CD8-positive, alpha-beta T cell (primary cell): ENCODE measurements at regions of chr12 and their contacts with region 1.

Region 1: GRCh38 chr12:56041552-56042429 is at the start of gene RPS26:
- DNase-seq: peak; percentile 79 to 99 (median 92)
- ATAC-seq: peak; percentile 93
- H3K4me3 ChIP-seq: peak within 1 kb of the TSS; percentile 71 to 83
- H3K4me3 Mint-ChIP-seq: peak within 1 kb of the TSS; percentile 99
- H3K27ac ChIP-seq: peak within 1 kb of the TSS; percentile 75 to 95
- H3K27ac Mint-ChIP-seq: peak within 1 kb of the TSS; percentile 99
- H3K4me1 ChIP-seq: peaks cover 29% of the 10 kb centered on the region
- H3K4me1 Mint-ChIP-seq: peaks cover 42% of the 10 kb centered on the region
- H3K27me3 ChIP-seq: no peaks in the 10 kb centered on the region
- H3K27me3 Mint-ChIP-seq: no peaks in the 10 kb centered on the region
- CTCF ChIP-seq: peak; percentile 48
- total RNA-seq, gene RPS26: 33.8 to 36.7 TPM

Region 2: DNA sequence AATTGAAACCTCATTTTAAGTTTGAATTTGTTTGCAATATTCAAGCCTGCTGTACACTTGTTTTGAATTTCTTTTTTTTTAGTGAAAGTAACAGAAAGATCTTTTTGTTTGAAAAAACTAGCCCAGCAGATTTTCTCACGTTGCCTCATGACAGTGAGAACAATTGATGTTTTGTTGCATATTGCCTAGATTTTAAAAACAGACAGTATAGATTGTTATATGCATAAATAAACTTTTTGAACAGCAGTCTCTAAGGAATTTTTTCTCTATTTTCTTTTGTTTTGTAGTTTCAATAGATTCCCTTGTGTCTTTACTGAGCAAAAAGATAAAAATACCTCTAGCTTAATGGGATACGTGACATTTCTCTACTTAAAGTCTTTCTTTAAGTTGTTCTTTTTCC is 760.8 kb before region 1 on chr12:
- CTCF ChIA-PET with region 1: no interaction called
- POLR2A ChIA-PET with region 1: no interaction called
- intact Hi-C with region 1: no loop called
- DNase-seq: no peak
- ATAC-seq: no peak
- H3K4me3 ChIP-seq: no peak overlapping the region
- H3K4me3 Mint-ChIP-seq: no peak overlapping the region
- H3K27ac ChIP-seq: no peak overlapping the region
- H3K27ac Mint-ChIP-seq: no peak overlapping the region
- H3K4me1 ChIP-seq: no peaks in the 10 kb centered on the region
- H3K4me1 Mint-ChIP-seq: no peaks in the 10 kb centered on the region
- H3K27me3 ChIP-seq: no peaks in the 10 kb centered on the region
- H3K27me3 Mint-ChIP-seq: peaks cover 18% of the 10 kb centered on the region
- CTCF ChIP-seq: no peak

Region 3: DNA sequence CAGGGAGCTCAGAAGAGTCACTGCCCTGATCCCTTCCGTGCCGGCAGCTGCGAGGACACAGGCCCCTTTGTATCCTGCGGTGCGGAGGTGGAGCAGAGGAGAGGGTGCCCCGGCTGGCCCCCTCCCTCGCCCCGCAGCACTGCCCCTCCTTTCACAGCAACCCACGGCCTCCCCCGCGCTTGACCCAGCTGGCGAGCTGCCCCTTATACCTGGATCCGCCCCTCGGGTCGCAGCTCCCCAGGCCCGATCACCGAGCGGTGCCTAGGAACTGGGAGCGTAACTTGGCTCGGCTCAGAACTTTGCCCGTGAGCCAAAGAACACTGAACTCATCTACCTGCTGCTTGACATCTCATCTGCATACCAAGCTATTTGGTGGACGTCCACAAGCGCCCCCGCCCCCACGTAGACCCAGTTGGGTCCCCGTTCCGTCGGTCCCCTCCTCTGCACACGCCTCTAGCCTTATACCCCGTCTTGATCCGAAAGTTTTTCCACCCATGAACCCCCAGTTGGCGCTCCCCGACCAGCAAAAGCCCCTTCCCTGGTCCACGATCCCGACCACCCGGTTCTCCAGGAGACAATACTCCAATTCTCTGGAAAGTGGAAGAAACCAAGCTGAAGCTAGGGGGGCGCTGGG is 211.7 kb before region 1 on chr12:
- CTCF ChIA-PET with region 1: interaction called, 3 read pairs
- POLR2A ChIA-PET with region 1: no interaction called
- intact Hi-C with region 1: loop called (anchors 1 kb)
- DNase-seq: peak in 7 of 9 experiments; percentile 15 to 63 (median 48)
- ATAC-seq: peak; percentile 16
- H3K4me3 ChIP-seq: peak overlapping the region; percentile 65 to 93
- H3K4me3 Mint-ChIP-seq: peak overlapping the region; percentile 99
- H3K27ac ChIP-seq: peak overlapping the region; percentile 71 to 79
- H3K27ac Mint-ChIP-seq: peak overlapping the region; percentile 95
- H3K4me1 ChIP-seq: peaks cover 45% of the 10 kb centered on the region
- H3K4me1 Mint-ChIP-seq: peaks cover 56% of the 10 kb centered on the region
- H3K27me3 ChIP-seq: no peaks in the 10 kb centered on the region
- H3K27me3 Mint-ChIP-seq: no peaks in the 10 kb centered on the region
- CTCF ChIP-seq: no peak

Region 4: DNA sequence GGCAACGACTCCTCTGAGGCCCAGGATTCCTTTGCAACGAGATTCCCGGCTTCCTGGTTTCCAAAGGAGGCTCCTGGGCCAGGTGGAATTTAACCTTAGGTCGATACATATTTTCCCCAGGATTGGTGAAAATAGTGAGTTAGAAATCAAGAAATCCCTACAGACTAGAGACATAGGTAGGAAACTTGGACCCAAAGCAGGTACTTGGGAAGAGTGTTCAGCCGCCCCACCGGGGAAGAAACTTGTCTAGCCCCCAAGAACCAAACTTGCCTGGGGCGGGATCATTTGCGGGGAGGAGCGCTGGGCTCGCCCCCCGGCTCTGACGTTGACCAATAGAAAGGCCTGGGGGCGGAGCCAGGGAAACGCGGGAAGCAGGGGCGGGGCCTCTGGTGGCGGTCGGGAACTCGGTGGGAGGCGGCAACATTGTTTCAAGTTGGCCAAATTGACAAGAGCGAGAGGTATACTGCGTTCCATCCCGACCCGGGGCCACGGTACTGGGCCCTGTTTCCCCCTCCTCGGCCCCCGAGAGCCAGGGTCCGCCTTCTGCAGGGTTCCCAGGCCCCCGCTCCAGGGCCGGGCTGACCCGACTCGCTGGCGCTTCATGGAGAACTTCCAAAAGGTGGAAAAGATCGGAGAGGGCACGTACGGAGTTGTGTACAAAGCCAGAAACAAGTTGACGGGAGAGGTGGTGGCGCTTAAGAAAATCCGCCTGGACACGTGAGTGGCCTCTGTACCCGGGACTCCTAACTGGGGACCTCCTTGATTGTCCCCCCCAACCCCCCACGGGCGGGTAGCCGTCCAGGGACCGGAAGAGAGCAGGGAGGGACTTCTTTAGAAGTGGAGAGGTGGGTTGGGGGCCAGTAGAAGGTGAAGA is 75.1 kb before region 1 on chr12 and contains the start of gene CDK2:
- CTCF ChIA-PET with region 1: no interaction called
- POLR2A ChIA-PET with region 1: no interaction called
- intact Hi-C with region 1: no loop called
- DNase-seq: peak; percentile 61 to 92 (median 91)
- ATAC-seq: peak; percentile 98
- H3K4me3 ChIP-seq: peak within 1 kb of the TSS; percentile 70 to 81
- H3K4me3 Mint-ChIP-seq: peak within 1 kb of the TSS; percentile 90
- H3K27ac ChIP-seq: peak within 1 kb of the TSS; percentile 41 to 46
- H3K27ac Mint-ChIP-seq: peak within 1 kb of the TSS; percentile 85
- H3K4me1 ChIP-seq: peaks cover 18% of the 10 kb centered on the region
- H3K4me1 Mint-ChIP-seq: peaks cover 34% of the 10 kb centered on the region
- H3K27me3 ChIP-seq: no peaks in the 10 kb centered on the region
- H3K27me3 Mint-ChIP-seq: no peaks in the 10 kb centered on the region
- CTCF ChIP-seq: no peak
- total RNA-seq, gene CDK2: 12.8 to 13.5 TPM

Region 5: GRCh38 chr12:55996715-55997534 is 44.9 kb before region 1 on chr12 and contains the start of gene SUOX:
- CTCF ChIA-PET with region 1: interaction called, 26 read pairs
- POLR2A ChIA-PET with region 1: interaction called, 6 read pairs
- intact Hi-C with region 1: loop called (anchors 1 kb)
- DNase-seq: peak in 6 of 9 experiments; percentile 7 to 52 (median 26)
- ATAC-seq: no peak
- H3K4me3 ChIP-seq: peak within 1 kb of the TSS; percentile 14 to 34
- H3K4me3 Mint-ChIP-seq: peak within 1 kb of the TSS; percentile 66
- H3K27ac ChIP-seq: no peak within 1 kb of the TSS
- H3K27ac Mint-ChIP-seq: no peak within 1 kb of the TSS
- H3K4me1 ChIP-seq: peaks cover 14% of the 10 kb centered on the region
- H3K4me1 Mint-ChIP-seq: peaks cover 23% of the 10 kb centered on the region
- H3K27me3 ChIP-seq: peaks cover 0 to 12% of the 10 kb centered on the region in 2 experiments
- H3K27me3 Mint-ChIP-seq: peaks cover 6% of the 10 kb centered on the region
- CTCF ChIP-seq: no peak
- total RNA-seq, gene SUOX: 0.72 to 1.2 TPM

Region 6: DNA sequence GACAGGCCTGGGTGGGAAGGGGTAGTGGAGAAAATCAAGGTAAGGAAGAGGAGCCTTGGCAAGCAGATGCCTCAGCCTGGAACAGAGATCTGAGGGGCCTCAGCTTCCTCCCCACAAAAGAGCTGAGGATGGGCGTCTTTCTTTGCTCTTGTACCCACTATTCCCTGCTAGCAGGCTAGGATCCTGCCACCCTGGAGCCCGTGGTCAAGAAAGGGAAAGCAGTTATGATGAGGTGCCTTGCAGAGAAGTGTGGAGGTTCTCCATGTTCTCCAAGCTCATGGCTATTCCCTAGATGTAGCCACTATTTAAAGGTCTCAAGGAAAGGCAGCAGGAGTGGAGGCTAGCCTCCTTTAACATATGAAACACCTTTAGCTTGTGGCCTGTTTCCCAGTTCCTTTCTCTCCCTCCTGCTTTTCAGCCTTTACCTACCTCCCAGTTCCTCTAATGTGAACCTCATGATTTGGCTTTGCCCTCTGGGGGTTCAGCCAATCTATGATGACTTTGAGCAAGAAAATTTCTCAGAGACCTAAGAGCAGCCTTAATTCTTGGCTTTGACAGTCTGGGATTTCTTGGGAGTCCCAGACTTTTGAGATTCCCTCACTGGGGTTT is 19.8 kb before region 1 on chr12:
- CTCF ChIA-PET with region 1: no interaction called
- POLR2A ChIA-PET with region 1: no interaction called
- intact Hi-C with region 1: no loop called
- DNase-seq: no peak
- ATAC-seq: peak; percentile 23
- H3K4me3 ChIP-seq: peak overlapping the region; percentile 11 to 17
- H3K4me3 Mint-ChIP-seq: peak overlapping the region; percentile 80
- H3K27ac ChIP-seq: no peak overlapping the region
- H3K27ac Mint-ChIP-seq: peak overlapping the region; percentile 69
- H3K4me1 ChIP-seq: peaks cover 21% of the 10 kb centered on the region
- H3K4me1 Mint-ChIP-seq: peaks cover 17% of the 10 kb centered on the region
- H3K27me3 ChIP-seq: no peaks in the 10 kb centered on the region
- H3K27me3 Mint-ChIP-seq: no peaks in the 10 kb centered on the region
- CTCF ChIP-seq: no peak

Region 7: GRCh38 chr12:56104109-56104814 is 62.5 kb after region 1 on chr12 and contains the start of gene PA2G4:
- CTCF ChIA-PET with region 1: interaction called, 12 read pairs
- POLR2A ChIA-PET with region 1: interaction called, 20 read pairs
- intact Hi-C with region 1: loop called (anchors 1 kb)
- DNase-seq: peak; percentile 91 to 99 (median 96)
- ATAC-seq: peak; percentile 88
- H3K4me3 ChIP-seq: peak within 1 kb of the TSS; percentile 90
- H3K4me3 Mint-ChIP-seq: peak within 1 kb of the TSS; percentile 99
- H3K27ac ChIP-seq: peak within 1 kb of the TSS; percentile 53 to 70
- H3K27ac Mint-ChIP-seq: peak within 1 kb of the TSS; percentile 98
- H3K4me1 ChIP-seq: peaks cover 37% of the 10 kb centered on the region
- H3K4me1 Mint-ChIP-seq: peaks cover 66% of the 10 kb centered on the region
- H3K27me3 ChIP-seq: no peaks in the 10 kb centered on the region
- H3K27me3 Mint-ChIP-seq: no peaks in the 10 kb centered on the region
- CTCF ChIP-seq: no peak
- total RNA-seq, gene PA2G4: 61.6 to 62.4 TPM

Region 8: DNA sequence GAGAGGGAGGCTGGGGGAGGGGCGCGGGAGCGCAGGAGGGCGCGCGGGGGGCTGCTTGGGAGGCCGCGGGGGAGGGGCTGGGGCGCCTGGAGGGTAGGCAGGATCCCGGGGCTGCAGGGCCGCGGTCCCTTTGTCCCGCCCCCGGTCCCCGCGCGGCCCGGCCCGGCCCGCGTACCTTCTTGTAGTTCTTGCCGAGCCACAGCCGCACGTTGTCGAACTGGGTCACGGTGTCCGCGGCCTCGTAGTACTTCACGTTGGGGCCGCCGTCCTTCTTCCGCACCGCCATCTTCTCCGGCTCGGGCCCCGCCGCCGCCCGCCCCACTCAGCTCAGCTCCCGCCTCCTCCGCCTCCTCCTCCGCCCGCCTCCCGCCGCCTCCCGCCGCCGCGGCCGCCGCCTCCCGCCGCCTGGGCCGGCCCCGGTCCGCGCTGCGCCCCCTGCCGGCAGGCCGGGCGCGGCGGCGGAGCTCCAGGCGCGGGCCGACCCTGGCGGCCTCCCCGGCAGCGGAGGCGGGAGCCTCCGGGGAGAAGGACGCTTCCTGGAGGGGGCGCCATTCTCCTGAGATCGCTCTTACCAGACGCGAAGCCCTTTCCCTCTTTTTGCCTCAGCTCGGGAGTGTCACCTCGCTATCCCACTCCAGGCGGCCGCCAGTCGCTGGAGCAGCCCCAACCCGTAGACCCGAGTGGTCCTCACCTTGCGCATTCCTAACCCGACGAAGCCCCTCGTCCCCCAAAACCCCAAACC is 147.6 kb after region 1 on chr12 and contains the start of gene SMARCC2:
- CTCF ChIA-PET with region 1: interaction called, 15 read pairs
- POLR2A ChIA-PET with region 1: interaction called, 7 read pairs
- intact Hi-C with region 1: loop called in 1 of 2 experiments (anchors 2 kb)
- DNase-seq: peak; percentile 69 to 94 (median 84)
- ATAC-seq: peak; percentile 82
- H3K4me3 ChIP-seq: peak within 1 kb of the TSS; percentile 65 to 96
- H3K4me3 Mint-ChIP-seq: peak within 1 kb of the TSS; percentile 96
- H3K27ac ChIP-seq: peak within 1 kb of the TSS; percentile 66 to 82
- H3K27ac Mint-ChIP-seq: peak within 1 kb of the TSS; percentile 94
- H3K4me1 ChIP-seq: peaks cover 19% of the 10 kb centered on the region
- H3K4me1 Mint-ChIP-seq: peaks cover 43% of the 10 kb centered on the region
- H3K27me3 ChIP-seq: no peaks in the 10 kb centered on the region
- H3K27me3 Mint-ChIP-seq: no peaks in the 10 kb centered on the region
- CTCF ChIP-seq: peak; percentile 61
- total RNA-seq, gene SMARCC2: 109 to 113 TPM

Region 9: DNA sequence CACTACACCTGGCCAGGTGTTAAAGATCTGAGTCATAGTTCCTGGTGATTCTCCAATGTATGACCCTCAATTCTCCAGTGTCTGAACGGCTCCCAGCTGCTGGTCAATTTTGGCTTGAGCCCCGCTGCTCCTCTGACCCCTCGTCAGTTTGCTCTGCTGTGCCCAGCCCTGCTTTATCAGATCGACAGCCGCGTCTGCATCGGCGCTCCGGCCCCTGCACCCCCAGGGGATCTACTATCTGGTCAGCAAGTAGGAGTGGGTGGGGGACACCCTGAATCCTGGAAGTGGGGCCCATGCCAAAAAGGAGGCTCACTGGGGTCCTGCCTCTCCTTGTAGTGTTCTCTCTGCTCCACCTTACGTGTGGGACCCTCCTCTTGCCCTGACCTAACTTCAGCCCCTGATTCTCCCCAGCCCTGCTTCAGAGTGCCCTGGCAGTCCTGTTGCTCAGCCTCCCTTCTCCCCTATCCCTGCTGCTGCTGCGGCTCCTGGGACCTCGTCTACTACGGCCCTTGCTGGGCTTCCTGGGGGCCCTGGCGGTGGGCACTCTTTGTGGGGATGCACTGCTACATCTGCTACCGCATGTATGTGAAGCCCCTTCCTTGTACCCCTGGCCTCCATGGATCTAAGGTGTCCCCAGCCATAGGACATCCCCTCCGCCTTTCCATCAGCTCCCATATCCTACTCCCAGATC is 193.1 kb after region 1 on chr12:
- CTCF ChIA-PET with region 1: no interaction called
- POLR2A ChIA-PET with region 1: no interaction called
- intact Hi-C with region 1: no loop called
- DNase-seq: no peak
- ATAC-seq: no peak
- H3K4me3 ChIP-seq: no peak overlapping the region
- H3K4me3 Mint-ChIP-seq: no peak overlapping the region
- H3K27ac ChIP-seq: no peak overlapping the region
- H3K27ac Mint-ChIP-seq: no peak overlapping the region
- H3K4me1 ChIP-seq: no peaks in the 10 kb centered on the region
- H3K4me1 Mint-ChIP-seq: no peaks in the 10 kb centered on the region
- H3K27me3 ChIP-seq: no peaks in the 10 kb centered on the region
- H3K27me3 Mint-ChIP-seq: no peaks in the 10 kb centered on the region
- CTCF ChIP-seq: no peak

Region 10: GRCh38 chr12:56468216-56469006 is 426.6 kb after region 1 on chr12 and contains the start of gene SPRYD4:
- CTCF ChIA-PET with region 1: no interaction called
- POLR2A ChIA-PET with region 1: no interaction called
- intact Hi-C with region 1: loop called (anchors 5 to 10 kb)
- DNase-seq: peak; percentile 89 to 97 (median 93)
- ATAC-seq: peak; percentile 90
- H3K4me3 ChIP-seq: peak within 1 kb of the TSS; percentile 72 to 99
- H3K4me3 Mint-ChIP-seq: peak within 1 kb of the TSS; percentile 95
- H3K27ac ChIP-seq: peak within 1 kb of the TSS; percentile 93 to 96
- H3K27ac Mint-ChIP-seq: peak within 1 kb of the TSS; percentile 98
- H3K4me1 ChIP-seq: peaks cover 10% of the 10 kb centered on the region
- H3K4me1 Mint-ChIP-seq: peaks cover 35% of the 10 kb centered on the region
- H3K27me3 ChIP-seq: no peaks in the 10 kb centered on the region
- H3K27me3 Mint-ChIP-seq: no peaks in the 10 kb centered on the region
- CTCF ChIP-seq: no peak
- total RNA-seq, gene SPRYD4: 6.8 to 6.9 TPM